OCI-LY7 (cell line): ENCODE measurements at regions of chr9 and their contacts with region 1.

Region 1: GRCh38 chr9:105355781-105356180 is 92.1 kb upstream of the FSD1L start:
- DNase-seq: peak; percentile 22
- H3K4me3 ChIP-seq: no peak overlapping the region
- H3K27ac ChIP-seq: no peak overlapping the region
- H3K4me1 ChIP-seq: peaks cover 52% of the 10 kb centered on the region
- CTCF ChIP-seq: no peak

Region 2: DNA sequence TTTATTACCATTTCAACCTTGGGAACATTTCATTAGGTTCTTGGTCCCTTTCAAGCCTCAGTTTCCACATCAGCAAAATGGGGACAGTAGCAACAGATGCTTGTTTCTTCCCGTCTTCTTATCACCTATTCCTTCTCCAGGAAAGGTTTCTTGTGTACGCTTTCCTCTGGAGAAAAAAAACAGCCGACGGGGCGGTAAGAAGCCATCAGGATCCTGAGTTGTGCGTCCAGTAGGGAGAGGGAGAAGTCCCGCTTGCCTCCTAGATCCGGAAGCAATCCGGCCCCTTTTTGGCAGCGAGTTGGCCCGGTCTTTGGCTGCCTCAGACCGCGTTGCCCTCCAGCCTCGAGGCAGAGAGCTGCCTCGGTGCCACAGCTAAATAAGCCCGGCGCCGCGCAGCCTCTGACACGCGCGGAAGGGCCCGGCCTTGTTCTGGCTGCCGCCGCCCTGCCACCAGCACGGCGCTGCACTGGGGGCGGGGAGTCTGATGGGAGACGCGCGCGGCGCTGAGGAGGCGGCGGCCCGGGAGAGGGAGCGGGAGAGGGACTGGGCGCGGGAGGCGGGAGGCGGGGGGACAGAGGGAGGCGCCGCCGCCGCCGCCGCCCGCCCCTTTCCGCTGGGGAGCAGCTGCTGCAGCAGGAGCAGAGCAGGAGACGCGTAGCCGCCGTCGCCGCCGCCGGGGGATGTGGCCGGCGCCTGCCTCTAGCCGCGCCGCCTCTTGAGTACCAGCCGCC is 111.6 kb before region 1 on chr9 and contains the start of gene SLC44A1:
- CTCF ChIA-PET with region 1: interaction called, 3 read pairs
- POLR2A ChIA-PET with region 1: interaction called, 6 read pairs
- intact Hi-C with region 1: loop called (anchors 10 kb)
- DNase-seq: peak; percentile 94
- H3K4me3 ChIP-seq: peak within 1 kb of the TSS; percentile 93
- H3K27ac ChIP-seq: peak within 1 kb of the TSS; percentile 62
- H3K4me1 ChIP-seq: peaks cover 44% of the 10 kb centered on the region
- CTCF ChIP-seq: no peak
- total RNA-seq, gene SLC44A1: 26.6 and 27.6 TPM in 2 replicates

Region 3: DNA sequence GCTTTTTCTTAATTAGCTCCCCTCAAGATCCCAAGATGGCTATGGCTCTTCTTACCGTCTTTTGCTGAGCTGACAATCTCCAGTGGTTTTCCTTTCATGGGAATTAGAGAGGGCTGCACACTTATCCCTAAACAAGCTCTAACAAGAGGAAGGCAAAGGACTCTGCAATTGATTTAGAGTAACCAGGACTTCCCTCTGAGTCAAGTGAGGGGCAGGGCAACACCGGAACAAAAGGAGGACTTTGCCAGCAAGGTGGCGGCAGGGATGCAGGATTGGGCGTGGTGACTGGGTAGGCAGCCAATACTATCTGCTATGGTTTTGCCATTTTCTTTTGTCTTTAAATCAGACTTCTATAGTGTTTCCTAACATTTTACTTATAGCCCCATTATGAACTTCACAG is 101.6 kb before region 1 on chr9:
- CTCF ChIA-PET with region 1: no interaction called
- POLR2A ChIA-PET with region 1: interaction called, 16 read pairs
- intact Hi-C with region 1: loop called (anchors 1 kb)
- DNase-seq: no peak
- H3K4me3 ChIP-seq: no peak overlapping the region
- H3K27ac ChIP-seq: no peak overlapping the region
- H3K4me1 ChIP-seq: peaks cover 70% of the 10 kb centered on the region
- CTCF ChIP-seq: no peak

Region 4: GRCh38 chr9:105259731-105260612 is 95.8 kb before region 1 on chr9:
- CTCF ChIA-PET with region 1: no interaction called
- POLR2A ChIA-PET with region 1: interaction called, 16 read pairs
- intact Hi-C with region 1: loop called (anchors 1 kb)
- DNase-seq: peak; percentile 33
- H3K4me3 ChIP-seq: peak overlapping the region; percentile 30
- H3K27ac ChIP-seq: peak overlapping the region; percentile 81
- H3K4me1 ChIP-seq: peaks cover 64% of the 10 kb centered on the region
- CTCF ChIP-seq: no peak

Region 5: DNA sequence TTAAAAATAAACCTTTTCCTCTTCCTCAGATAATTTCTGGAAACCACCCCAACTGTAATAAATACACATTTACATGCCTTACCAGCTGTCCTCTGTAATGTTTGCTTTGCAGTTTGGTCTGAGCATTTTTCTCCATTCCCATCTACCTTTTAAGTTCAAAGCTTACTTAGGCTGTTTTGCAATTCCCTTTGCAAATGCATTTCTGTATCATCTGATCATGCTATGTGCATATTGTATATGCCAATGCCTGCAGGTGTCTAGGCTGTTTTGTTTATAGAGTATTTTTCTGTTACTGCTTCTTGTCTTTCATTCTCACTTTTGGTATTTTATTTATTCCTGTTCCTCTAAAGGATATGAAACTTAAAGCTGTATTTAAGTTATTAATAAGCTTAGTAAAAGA is 25.0 kb before region 1 on chr9:
- CTCF ChIA-PET with region 1: interaction called, 3 read pairs
- POLR2A ChIA-PET with region 1: interaction called, 12 read pairs
- intact Hi-C with region 1: no loop called
- DNase-seq: peak; percentile 32
- H3K4me3 ChIP-seq: peak overlapping the region; percentile 9
- H3K27ac ChIP-seq: peak overlapping the region; percentile 43
- H3K4me1 ChIP-seq: peaks cover 38% of the 10 kb centered on the region
- CTCF ChIP-seq: no peak

Region 6: GRCh38 chr9:105405514-105406131 is 49.8 kb after region 1 on chr9:
- CTCF ChIA-PET with region 1: no interaction called
- POLR2A ChIA-PET with region 1: interaction called, 7 read pairs
- intact Hi-C with region 1: loop called (anchors 5 kb)
- DNase-seq: peak; percentile 71
- H3K4me3 ChIP-seq: peak overlapping the region; percentile 29
- H3K27ac ChIP-seq: peak overlapping the region; percentile 85
- H3K4me1 ChIP-seq: peaks cover 56% of the 10 kb centered on the region
- CTCF ChIP-seq: no peak

Region 7: DNA sequence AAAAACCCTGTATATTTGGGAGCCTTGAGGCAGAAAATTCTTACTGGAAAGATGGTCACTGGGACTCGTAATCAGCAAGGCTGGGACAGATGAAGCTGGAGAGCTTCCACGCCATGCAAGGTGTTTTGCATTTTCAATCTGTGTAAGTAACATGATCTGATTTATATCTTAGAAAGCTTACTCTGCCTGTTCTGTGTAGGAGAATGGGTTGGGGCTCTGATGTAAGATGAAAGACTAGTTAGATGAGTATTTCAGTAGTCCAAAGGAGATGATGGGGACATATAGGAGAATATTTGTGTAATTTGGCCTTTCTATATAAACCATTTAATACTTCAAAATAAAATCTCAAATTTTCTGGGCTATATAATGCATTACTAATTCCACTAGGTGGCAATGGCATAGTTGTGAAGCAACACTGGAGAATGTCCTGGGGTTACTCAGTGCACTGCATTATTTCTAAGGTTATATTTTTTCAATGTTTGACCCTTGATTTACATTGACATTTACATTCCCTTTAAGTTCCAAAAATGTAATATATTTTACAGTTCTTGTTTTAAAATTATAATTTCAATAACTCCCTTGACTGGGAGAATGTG is 70.2 kb after region 1 on chr9:
- CTCF ChIA-PET with region 1: no interaction called
- POLR2A ChIA-PET with region 1: no interaction called
- intact Hi-C with region 1: no loop called
- DNase-seq: peak; percentile 33
- H3K4me3 ChIP-seq: no peak overlapping the region
- H3K27ac ChIP-seq: no peak overlapping the region
- H3K4me1 ChIP-seq: no peaks in the 10 kb centered on the region
- CTCF ChIP-seq: peak; percentile 82